A673 (cell line): ENCODE measurements at regions of chr19 and their contacts with region 1.

Region 1: GRCh38 chr19:6048808-6049405 is 61.4 kb downstream of the RFX2 start:
- DNase-seq: peak; percentile 87
- H3K4me3 ChIP-seq: no peak overlapping the region
- H3K27ac ChIP-seq: no peak overlapping the region
- H3K4me1 ChIP-seq: no peaks in the 10 kb centered on the region
- H3K27me3 ChIP-seq: no peaks in the 10 kb centered on the region
- CTCF ChIP-seq: peak; percentile 88

Region 2: GRCh38 chr19:5246554-5247155 is 802.3 kb before region 1 on chr19:
- CTCF ChIA-PET with region 1: no interaction called
- POLR2A ChIA-PET with region 1: no interaction called
- intact Hi-C with region 1: no loop called
- DNase-seq: no peak
- H3K4me3 ChIP-seq: no peak overlapping the region
- H3K27ac ChIP-seq: no peak overlapping the region
- H3K4me1 ChIP-seq: no peaks in the 10 kb centered on the region
- H3K27me3 ChIP-seq: no peaks in the 10 kb centered on the region
- CTCF ChIP-seq: no peak

Region 3: GRCh38 chr19:6125571-6125989 is 76.7 kb after region 1 on chr19:
- CTCF ChIA-PET with region 1: interaction called, 28 read pairs
- POLR2A ChIA-PET with region 1: no interaction called
- intact Hi-C with region 1: loop called (anchors 1 kb)
- DNase-seq: peak; percentile 86
- H3K4me3 ChIP-seq: no peak overlapping the region
- H3K27ac ChIP-seq: no peak overlapping the region
- H3K4me1 ChIP-seq: no peaks in the 10 kb centered on the region
- H3K27me3 ChIP-seq: no peaks in the 10 kb centered on the region
- CTCF ChIP-seq: peak; percentile 91

Region 4: DNA sequence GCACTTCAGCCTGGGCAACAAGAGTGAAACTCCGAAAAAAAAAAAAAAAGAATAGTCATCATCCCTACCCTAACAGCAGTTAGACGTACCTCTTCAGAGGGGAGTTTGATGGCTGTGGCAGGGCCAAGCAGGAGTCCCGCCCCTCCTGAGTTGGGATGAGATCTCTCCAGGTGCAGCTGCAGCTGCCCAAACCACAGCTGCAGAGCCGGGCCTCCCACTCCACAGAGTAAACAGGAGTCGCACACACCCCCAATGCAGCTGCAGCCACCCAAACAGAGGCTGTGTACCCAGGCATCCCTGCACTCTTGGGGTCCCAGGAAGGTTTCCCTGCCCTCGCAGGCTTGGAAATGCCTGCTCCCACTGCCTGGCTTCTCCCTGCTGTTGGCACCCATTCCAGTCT is 248.3 kb after region 1 on chr19:
- CTCF ChIA-PET with region 1: no interaction called
- POLR2A ChIA-PET with region 1: no interaction called
- intact Hi-C with region 1: loop called (anchors 5 kb)
- DNase-seq: no peak
- H3K4me3 ChIP-seq: no peak overlapping the region
- H3K27ac ChIP-seq: no peak overlapping the region
- H3K4me1 ChIP-seq: no peaks in the 10 kb centered on the region
- H3K27me3 ChIP-seq: no peaks in the 10 kb centered on the region
- CTCF ChIP-seq: no peak